PC-9 (cell line): ENCODE measurements at regions of chr11 and their contacts with region 1.

Region 1: GRCh38 chr11:128210148-128210940 is 377.0 kb downstream of the ETS1 start:
- DNase-seq: peak; percentile 77 to 100
- H3K4me3 ChIP-seq: peak overlapping the region; percentile 16; the same call in 1 of the 2 replicates
- H3K27ac ChIP-seq: peak overlapping the region; percentile 100
- H3K4me1 ChIP-seq: peaks cover 59% of the 10 kb centered on the region
- H3K27me3 ChIP-seq: no peaks in the 10 kb centered on the region
- CTCF ChIP-seq: no peak

Region 2: GRCh38 chr11:128180446-128181087 is 29.8 kb before region 1 on chr11:
- CTCF ChIA-PET with region 1: no interaction called
- POLR2A ChIA-PET with region 1: no interaction called
- intact Hi-C with region 1: loop called (anchors 1 kb)
- DNase-seq: peak; percentile 21 to 57
- H3K4me3 ChIP-seq: no peak overlapping the region
- H3K27ac ChIP-seq: peak overlapping the region; percentile 44; the same call in 1 of the 2 replicates
- H3K4me1 ChIP-seq: peaks cover 14% of the 10 kb centered on the region; the same call in 1 of the 2 replicates
- H3K27me3 ChIP-seq: no peaks in the 10 kb centered on the region
- CTCF ChIP-seq: no peak

Region 3: DNA sequence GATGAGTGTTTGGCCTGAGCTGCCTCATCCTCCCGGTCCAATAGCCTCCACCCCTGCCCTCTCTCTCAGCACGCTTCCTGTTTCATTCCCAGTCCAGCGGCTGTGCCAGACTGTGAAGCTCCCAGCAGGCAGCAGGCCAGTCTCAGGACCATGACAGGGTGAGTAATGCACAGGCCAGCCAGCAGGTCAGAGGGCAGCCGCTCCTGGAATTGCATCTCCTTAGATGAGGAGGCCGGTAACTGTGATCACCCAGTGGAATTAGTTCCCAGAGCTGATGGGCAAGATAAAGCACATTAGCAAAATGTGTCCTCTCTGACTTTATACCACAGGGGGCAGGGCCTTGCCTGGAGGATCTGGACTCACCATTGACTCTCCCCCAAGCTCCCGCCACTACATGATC is 125.9 kb after region 1 on chr11:
- CTCF ChIA-PET with region 1: no interaction called
- POLR2A ChIA-PET with region 1: no interaction called
- intact Hi-C with region 1: loop called (anchors 1 kb)
- DNase-seq: peak; percentile 88 to 98
- H3K4me3 ChIP-seq: no peak overlapping the region
- H3K27ac ChIP-seq: 0 out of 2 replicates have a peak overlapping the region, but pooled peaks have one; percentile 40
- H3K4me1 ChIP-seq: peaks cover 19% of the 10 kb centered on the region
- H3K27me3 ChIP-seq: no peaks in the 10 kb centered on the region
- CTCF ChIP-seq: peak; percentile 22; the same call in 1 of the 2 replicates

Region 4: DNA sequence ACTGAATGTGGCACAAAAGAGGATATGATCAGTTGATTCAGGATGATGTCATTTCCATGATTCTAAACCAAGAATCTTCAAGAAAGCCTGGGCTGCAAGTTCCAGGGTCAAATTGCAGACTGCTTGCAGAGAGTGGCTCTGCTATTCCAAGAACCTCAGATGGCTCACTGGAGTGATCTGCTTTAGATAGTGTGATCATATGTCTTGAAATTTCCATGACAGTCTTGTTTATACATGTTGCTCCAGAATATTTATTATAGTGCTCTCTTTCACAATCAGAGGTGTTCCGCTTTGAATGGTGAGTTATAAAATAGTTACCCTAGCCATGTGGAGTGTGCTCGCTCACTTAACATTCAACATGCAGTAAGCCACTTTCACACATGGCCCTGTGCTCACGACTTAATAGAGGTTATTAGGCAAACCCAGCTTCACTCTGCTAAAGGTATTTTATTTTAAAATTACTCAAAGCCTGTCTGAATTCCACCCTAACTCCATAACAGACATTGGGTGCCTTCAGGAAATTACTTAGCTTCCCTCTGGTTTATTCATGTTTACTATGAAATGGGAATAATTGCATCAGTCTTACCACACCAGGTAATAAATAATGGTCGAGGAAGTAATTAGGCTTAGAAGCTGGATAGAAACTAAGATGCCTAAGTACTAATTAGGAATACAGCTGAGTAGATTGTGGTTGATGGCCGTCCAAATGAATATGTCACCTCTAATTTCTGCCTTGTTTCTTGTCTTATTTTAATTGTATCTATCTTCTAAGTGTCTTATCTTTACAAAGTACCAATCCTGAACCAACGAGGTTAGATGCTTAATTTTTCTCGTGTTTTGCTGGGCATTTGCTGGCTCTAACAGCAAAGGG is 189.1 kb after region 1 on chr11:
- CTCF ChIA-PET with region 1: no interaction called
- POLR2A ChIA-PET with region 1: no interaction called
- intact Hi-C with region 1: no loop called
- DNase-seq: no peak
- H3K4me3 ChIP-seq: no peak overlapping the region
- H3K27ac ChIP-seq: no peak overlapping the region
- H3K4me1 ChIP-seq: no peaks in the 10 kb centered on the region
- H3K27me3 ChIP-seq: no peaks in the 10 kb centered on the region
- CTCF ChIP-seq: no peak

Region 5: GRCh38 chr11:128497061-128497775 is 286.9 kb after region 1 on chr11:
- CTCF ChIA-PET with region 1: no interaction called
- POLR2A ChIA-PET with region 1: no interaction called
- intact Hi-C with region 1: loop called (anchors 2 kb)
- DNase-seq: peak; percentile 80 to 97
- H3K4me3 ChIP-seq: peak overlapping the region; percentile 49; the same call in 1 of the 2 replicates
- H3K27ac ChIP-seq: peak overlapping the region; percentile 99
- H3K4me1 ChIP-seq: peaks cover 79% of the 10 kb centered on the region
- H3K27me3 ChIP-seq: no peaks in the 10 kb centered on the region
- CTCF ChIP-seq: no peak

Region 6: DNA sequence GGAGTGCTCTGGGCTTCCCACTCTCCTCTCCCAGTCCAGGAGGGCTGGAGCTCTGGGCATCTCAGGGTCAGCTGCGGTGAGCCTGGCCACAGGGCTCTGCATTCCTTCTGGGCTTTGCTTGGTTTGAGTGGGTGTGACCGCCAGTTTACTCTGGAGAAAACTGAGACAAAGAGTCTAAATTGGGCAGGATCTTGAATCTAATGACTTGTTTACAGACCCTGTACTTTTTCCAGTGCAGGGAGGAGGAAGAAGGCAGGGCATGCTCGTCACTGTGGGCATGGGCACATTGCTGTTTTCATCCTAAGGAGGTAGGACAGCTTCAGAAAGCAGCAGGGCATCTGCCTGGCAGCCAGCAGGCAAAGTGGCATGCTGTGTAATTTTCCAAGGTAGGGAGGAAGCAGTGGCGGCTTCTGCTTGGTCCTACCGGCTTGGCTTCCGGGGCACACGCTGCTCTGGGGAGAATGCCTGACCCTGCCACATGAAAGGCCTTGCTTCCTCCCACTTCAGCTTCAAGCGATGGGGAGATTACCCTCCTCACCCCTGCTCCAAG is 506.4 kb after region 1 on chr11:
- CTCF ChIA-PET with region 1: no interaction called
- POLR2A ChIA-PET with region 1: no interaction called
- intact Hi-C with region 1: loop called (anchors 1 kb)
- DNase-seq: peak in 1 of 2 experiments; percentile 59
- H3K4me3 ChIP-seq: no peak overlapping the region
- H3K27ac ChIP-seq: no peak overlapping the region
- H3K4me1 ChIP-seq: no peaks in the 10 kb centered on the region
- H3K27me3 ChIP-seq: no peaks in the 10 kb centered on the region
- CTCF ChIP-seq: no peak